CD8-positive, alpha-beta memory T cell (primary cell): ENCODE measurements at regions of chr15 and their contacts with region 1.

Region 1: DNA sequence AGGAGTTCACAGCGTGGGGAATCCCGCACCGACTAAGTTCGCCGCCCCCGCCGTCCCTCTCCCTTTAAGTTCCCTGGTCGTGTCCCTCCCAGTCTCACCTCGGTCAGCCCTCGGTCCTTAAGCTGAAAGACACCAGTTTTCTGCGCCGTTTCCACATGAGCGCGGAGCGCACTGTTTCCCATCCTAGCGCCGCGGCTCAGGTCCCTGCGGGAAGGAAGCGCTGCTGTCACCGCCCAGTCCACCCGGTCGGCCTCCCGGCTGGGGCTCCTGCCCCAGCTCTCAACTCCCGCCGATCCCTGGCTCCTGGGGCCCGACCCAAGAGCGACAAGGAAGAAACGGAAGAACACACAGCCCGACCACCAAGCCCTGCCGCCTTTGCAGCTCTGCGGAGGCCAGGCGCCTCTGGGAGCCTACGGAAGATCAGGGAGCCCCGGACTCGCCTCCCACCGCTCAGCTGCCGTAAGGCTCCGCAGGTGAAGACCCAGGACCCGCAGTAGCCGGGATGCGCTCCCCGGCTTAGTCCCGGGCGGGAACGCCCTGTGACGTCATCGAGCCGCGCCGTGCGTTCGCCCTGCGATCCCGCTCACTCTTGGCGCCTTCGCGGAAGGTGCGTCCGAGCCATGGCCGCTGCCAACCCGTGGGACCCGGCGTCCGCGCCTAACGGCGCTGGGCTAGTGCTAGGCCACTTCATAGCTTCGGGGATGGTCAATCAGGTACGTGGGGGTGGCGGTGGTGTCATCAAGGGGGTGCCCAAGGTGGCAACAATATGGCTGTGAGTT is at the starts of genes HAUS2 and LRRC57:
- DNase-seq: peak; percentile 80 to 89 (median 87)
- H3K4me3 ChIP-seq: peak within 1 kb of the TSS; percentile 100
- H3K4me3 Mint-ChIP-seq: peak within 1 kb of the TSS; percentile 92 to 99 (median 96)
- H3K27ac ChIP-seq: peak within 1 kb of the TSS; percentile 99
- H3K27ac Mint-ChIP-seq: peak within 1 kb of the TSS; percentile 84 to 99 (median 95)
- H3K4me1 ChIP-seq: peaks cover 33% of the 10 kb centered on the region
- H3K4me1 Mint-ChIP-seq: peaks cover 50 to 69% (median 69%) of the 10 kb centered on the region in 3 donors
- H3K27me3 ChIP-seq: no peaks in the 10 kb centered on the region
- H3K27me3 Mint-ChIP-seq: no peaks in the 10 kb centered on the region
- total RNA-seq, gene HAUS2: 56.7 to 56.8 TPM
- total RNA-seq, gene LRRC57: 23.7 to 24.7 TPM

Region 2: DNA sequence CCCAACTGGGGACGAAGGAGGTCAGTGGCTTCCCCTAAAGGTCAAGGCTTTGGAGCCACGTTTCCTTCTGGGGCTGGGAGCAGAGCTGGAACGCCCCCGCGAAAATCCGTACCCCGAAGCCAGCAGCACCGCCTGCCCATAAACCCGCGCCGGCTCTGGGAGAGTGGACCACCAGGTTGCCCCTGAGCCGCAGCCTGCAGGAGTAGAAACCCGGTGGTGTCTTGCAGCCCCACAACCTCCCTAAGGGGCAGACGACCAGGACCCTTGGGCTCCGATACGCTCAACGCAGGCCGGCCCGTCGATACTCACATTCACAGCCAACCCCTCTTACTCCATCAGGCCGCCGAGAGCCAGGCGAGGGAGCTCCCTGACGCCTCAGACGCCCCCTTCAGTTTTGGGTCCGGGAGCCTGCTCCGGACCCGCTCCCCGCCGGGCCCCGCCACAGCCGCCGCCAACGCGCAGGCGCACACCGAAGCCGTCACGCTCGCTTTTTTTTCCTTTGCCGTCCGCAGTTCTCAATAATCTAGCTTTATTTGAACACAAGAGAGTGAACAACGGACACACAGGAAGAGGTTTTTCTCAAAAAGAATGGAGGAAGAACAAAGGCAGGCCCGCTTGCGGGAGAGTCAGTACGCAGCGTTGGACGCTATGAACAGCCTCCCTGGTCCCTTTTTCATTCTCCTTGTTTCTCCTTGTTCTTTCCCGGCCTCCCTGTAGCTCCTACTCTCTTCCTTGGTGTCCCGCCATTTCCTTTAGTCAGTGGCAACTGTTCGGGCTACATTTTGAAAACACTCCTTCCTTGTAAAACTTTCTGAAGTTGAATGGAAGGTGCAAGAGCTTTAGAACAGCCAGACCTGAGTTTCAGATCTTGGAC is 57.5 kb before region 1 on chr15 and contains the start of gene ZNF106:
- CTCF ChIA-PET with region 1: interaction called, 3 read pairs
- POLR2A ChIA-PET with region 1: interaction called, 13 read pairs
- DNase-seq: peak; percentile 82 to 92 (median 91)
- H3K4me3 ChIP-seq: peak within 1 kb of the TSS; percentile 82
- H3K4me3 Mint-ChIP-seq: peak within 1 kb of the TSS; percentile 95 to 100 (median 99)
- H3K27ac ChIP-seq: peak within 1 kb of the TSS; percentile 92
- H3K27ac Mint-ChIP-seq: peak within 1 kb of the TSS; percentile 95 to 100 (median 99)
- H3K4me1 ChIP-seq: peaks cover 37% of the 10 kb centered on the region
- H3K4me1 Mint-ChIP-seq: peaks cover 46 to 68% (median 54%) of the 10 kb centered on the region in 3 donors
- H3K27me3 ChIP-seq: no peaks in the 10 kb centered on the region
- H3K27me3 Mint-ChIP-seq: no peaks in the 10 kb centered on the region
- total RNA-seq, gene ZNF106: 48.5 to 50.0 TPM

Region 3: GRCh38 chr15:42528970-42529369 is 19.5 kb before region 1 on chr15:
- CTCF ChIA-PET with region 1: no interaction called
- POLR2A ChIA-PET with region 1: no interaction called
- DNase-seq: no peak
- H3K4me3 ChIP-seq: no peak overlapping the region
- H3K4me3 Mint-ChIP-seq: no peak overlapping the region
- H3K27ac ChIP-seq: no peak overlapping the region
- H3K27ac Mint-ChIP-seq: peak overlapping the region in 2 of 8 donors; percentile 17 to 51
- H3K4me1 ChIP-seq: no peaks in the 10 kb centered on the region
- H3K4me1 Mint-ChIP-seq: no peaks in the 10 kb centered on the region
- H3K27me3 ChIP-seq: no peaks in the 10 kb centered on the region
- H3K27me3 Mint-ChIP-seq: no peaks in the 10 kb centered on the region

Region 4: GRCh38 chr15:42575188-42576039 is 27.0 kb after region 1 on chr15 and contains the start of gene STARD9:
- CTCF ChIA-PET with region 1: no interaction called
- POLR2A ChIA-PET with region 1: interaction called, 18 read pairs
- DNase-seq: peak; percentile 91 to 95 (median 94)
- H3K4me3 ChIP-seq: peak within 1 kb of the TSS; percentile 83
- H3K4me3 Mint-ChIP-seq: peak within 1 kb of the TSS; percentile 83 to 97 (median 95)
- H3K27ac ChIP-seq: no peak within 1 kb of the TSS
- H3K27ac Mint-ChIP-seq: peak within 1 kb of the TSS; percentile 61 to 90 (median 82)
- H3K4me1 ChIP-seq: peaks cover 8% of the 10 kb centered on the region
- H3K4me1 Mint-ChIP-seq: peaks cover 23 to 31% (median 24%) of the 10 kb centered on the region in 3 donors
- H3K27me3 ChIP-seq: no peaks in the 10 kb centered on the region
- H3K27me3 Mint-ChIP-seq: peaks cover 0 to 2% of the 10 kb centered on the region in 2 donors
- total RNA-seq, gene STARD9: 6.5 to 7.6 TPM